ENCODE measurements at regions of chr17 and their contacts with region 1.

Region 1: GRCh38 chr17:40443583-40444327 is 505 bp downstream of the IGFBP4 start:
- DNase-seq: peak; percentile 84
- H3K4me3 ChIP-seq: peak overlapping the region; percentile 58 to 74 (median 66)
- H3K27ac ChIP-seq: peak overlapping the region; percentile 94 to 98 (median 96)
- H3K4me1 ChIP-seq: peaks cover 28 to 64% (median 46%) of the 10 kb centered on the region in 4 donors
- H3K27me3 ChIP-seq: no peaks in the 10 kb centered on the region
- CTCF ChIP-seq: peak in 4 of 5 experiments; percentile 29 to 57 (median 38)
- EP300 ChIP-seq: no peak
- POLR2A ChIP-seq: no peak

Region 2: DNA sequence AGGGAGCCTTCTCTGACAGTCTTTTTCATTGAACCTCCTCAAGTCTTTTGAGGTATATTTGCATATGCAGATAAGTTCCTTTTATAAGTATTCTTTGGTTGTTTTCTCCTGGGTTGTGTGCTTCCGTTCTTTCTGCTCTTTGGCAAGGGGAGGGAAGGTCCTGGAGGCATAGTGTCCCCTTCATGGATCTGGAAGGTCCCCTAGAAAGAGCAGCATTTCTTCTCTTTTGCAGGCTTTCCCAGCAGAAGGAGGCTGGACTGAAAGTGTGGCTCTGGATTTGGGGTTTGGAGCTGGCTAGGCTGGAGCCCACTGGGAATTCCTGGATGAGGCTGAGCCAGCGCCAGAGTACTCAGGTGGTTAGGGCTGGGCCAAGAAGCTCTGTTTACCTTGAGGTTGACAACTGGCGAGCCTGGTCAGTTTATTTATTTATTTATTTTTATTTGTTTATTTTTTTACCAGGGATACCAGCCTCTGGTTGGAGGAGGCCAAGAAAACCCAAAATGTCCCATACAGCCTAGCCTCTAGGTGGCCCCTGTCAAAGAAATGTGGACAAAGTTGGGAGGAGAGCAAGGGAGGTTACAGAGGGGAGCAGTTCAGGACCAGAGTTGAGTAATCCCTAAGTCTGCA is 20.7 kb before region 1 on chr17:
- in situ Hi-C with region 1: no loop called
- intact Hi-C with region 1: loop called (anchors 1 kb)
- DNase-seq: no peak
- H3K4me3 ChIP-seq: no peak overlapping the region
- H3K27ac ChIP-seq: no peak overlapping the region
- H3K4me1 ChIP-seq: peaks cover 0 to 10% (median 3%) of the 10 kb centered on the region in 4 donors
- H3K27me3 ChIP-seq: no peaks in the 10 kb centered on the region
- CTCF ChIP-seq: no peak
- EP300 ChIP-seq: no peak
- POLR2A ChIP-seq: no peak

Region 3: GRCh38 chr17:40479533-40480480 is 36.1 kb after region 1 on chr17:
- in situ Hi-C with region 1: no loop called
- intact Hi-C with region 1: loop called (anchors 5 kb)
- DNase-seq: no peak
- H3K4me3 ChIP-seq: no peak overlapping the region
- H3K27ac ChIP-seq: no peak overlapping the region
- H3K4me1 ChIP-seq: peaks cover 11 to 40% (median 20%) of the 10 kb centered on the region in 4 donors
- H3K27me3 ChIP-seq: no peaks in the 10 kb centered on the region
- CTCF ChIP-seq: no peak
- EP300 ChIP-seq: no peak
- POLR2A ChIP-seq: no peak

Region 4: GRCh38 chr17:40531051-40531991 is 87.6 kb after region 1 on chr17:
- in situ Hi-C with region 1: loop called (anchors 5 to 25 kb)
- intact Hi-C with region 1: loop called (anchors 5 kb)
- DNase-seq: no peak
- H3K4me3 ChIP-seq: no peak overlapping the region
- H3K27ac ChIP-seq: peak overlapping the region in 1 of 4 donors; percentile 68
- H3K4me1 ChIP-seq: peaks cover 14 to 30% (median 20%) of the 10 kb centered on the region in 4 donors
- H3K27me3 ChIP-seq: no peaks in the 10 kb centered on the region
- CTCF ChIP-seq: no peak
- EP300 ChIP-seq: no peak
- POLR2A ChIP-seq: no peak

Region 5: DNA sequence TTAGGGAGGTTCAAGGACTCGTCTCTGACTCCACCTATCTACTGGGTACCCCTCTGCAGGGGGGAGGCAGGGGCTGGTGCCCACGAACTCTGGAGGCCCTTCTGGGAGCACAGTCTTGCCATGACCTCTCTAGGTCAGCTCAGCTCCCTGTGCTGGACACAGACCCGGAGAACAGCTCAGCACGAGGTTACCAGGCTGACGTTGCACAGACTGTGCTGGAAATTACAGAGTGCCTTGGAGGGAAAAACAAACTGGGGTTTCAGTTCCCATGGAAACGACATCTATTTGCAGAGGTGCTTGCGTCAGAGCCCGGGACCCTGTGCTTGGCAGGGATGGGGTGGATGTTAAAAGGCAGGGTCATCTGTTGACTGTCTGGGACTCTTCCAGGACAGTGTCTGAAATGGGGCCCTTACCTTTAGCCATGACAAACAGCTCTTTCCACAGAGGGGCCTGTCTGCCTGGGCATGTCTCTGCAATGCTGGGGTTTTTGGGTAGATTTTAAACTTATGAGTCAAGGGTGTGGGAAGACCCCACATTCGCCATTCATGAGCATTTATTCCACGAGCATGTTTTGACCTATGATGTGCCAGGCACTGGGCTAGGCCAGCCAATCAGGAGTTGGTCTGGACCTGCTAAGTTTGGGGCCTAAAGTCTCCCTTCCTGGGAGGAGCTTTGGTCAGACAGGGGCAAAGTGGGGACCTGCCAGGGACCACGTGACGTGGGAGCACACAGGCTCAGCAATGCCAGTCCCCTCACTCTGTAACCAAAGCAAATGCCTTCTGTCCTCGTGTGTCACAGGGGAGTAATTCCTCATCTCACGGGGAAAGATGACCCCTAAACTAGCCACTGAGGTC is 99.0 kb after region 1 on chr17:
- in situ Hi-C with region 1: loop called in 3 of 4 experiments (anchors 10 to 25 kb)
- intact Hi-C with region 1: no loop called
- DNase-seq: peak; percentile 73
- H3K4me3 ChIP-seq: no peak overlapping the region
- H3K27ac ChIP-seq: peak overlapping the region; percentile 83 to 92 (median 86)
- H3K4me1 ChIP-seq: peaks cover 16 to 44% (median 34%) of the 10 kb centered on the region in 4 donors
- H3K27me3 ChIP-seq: no peaks in the 10 kb centered on the region
- CTCF ChIP-seq: no peak
- EP300 ChIP-seq: peak; percentile 97
- POLR2A ChIP-seq: no peak

Measured in transverse colon (tissue), 4 donors.